Activated CD8-positive, alpha-beta T cell treated with anti-CD3 and anti-CD28 coated beads for 36 hours (primary cell): ENCODE measurements at regions of chr3 and their contacts with region 1.

Region 1: DNA sequence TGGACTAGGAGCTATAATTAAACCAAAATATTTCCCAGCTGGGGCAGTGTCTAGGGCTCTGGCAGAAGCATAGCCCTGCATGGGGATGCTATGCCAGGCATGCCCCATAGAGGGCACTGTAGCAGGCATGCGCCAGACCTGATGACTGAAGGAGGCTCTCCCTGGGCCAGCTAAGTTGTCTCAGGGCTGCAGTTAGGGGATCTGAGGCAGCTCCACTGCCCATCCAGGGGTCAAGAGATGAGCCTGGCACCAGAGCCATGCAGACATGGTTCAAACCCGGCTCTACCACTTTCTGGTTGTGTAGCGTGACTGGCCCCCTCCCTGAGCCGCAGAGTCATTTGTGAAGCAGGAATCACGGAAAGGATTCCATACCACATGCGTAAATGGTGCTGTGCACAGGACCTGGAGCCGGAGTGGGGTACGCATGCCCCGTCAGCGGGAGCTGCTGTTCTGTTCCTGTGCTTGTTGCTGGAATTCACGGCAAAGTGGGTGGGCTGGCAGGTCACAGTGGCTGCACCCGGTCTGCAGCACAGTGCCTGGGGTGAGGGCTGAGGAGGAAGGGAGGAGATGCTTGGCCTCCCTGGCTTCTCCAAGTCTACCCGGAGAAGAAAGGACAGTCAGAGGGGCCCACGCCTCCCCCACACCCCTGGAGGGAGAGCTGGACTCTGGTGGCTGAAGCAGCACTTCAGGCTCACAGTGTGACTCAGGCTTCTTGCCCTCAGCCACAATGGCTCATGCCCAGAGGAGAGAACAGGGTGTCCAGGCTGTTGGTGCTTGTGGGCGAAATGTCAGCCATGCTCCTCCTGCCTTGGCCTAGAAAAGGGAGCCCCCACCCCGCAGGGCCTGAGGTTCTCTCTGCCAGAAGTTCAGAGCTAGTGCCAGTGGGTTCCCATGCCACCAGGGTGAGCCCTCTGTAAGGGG is 43.1 kb downstream of the DNASE1L3 start:
- DNase-seq: peak; percentile 80
- ATAC-seq: peak; percentile 99
- H3K4me3 Mint-ChIP-seq: no peak overlapping the region
- H3K27ac Mint-ChIP-seq: no peak overlapping the region
- H3K4me1 Mint-ChIP-seq: peaks cover 3% of the 10 kb centered on the region
- H3K27me3 Mint-ChIP-seq: no peaks in the 10 kb centered on the region
- CTCF ChIP-seq: peak; percentile 92

Region 2: GRCh38 chr3:57983734-57984518 is 183.8 kb before region 1 on chr3:
- CTCF ChIA-PET with region 1: no interaction called
- POLR2A ChIA-PET with region 1: no interaction called
- intact Hi-C with region 1: no loop called
- DNase-seq: peak; percentile 76
- ATAC-seq: peak; percentile 97
- H3K4me3 Mint-ChIP-seq: no peak overlapping the region
- H3K27ac Mint-ChIP-seq: peak overlapping the region; percentile 92
- H3K4me1 Mint-ChIP-seq: peaks cover 18% of the 10 kb centered on the region
- H3K27me3 Mint-ChIP-seq: no peaks in the 10 kb centered on the region
- CTCF ChIP-seq: no peak

Region 3: DNA sequence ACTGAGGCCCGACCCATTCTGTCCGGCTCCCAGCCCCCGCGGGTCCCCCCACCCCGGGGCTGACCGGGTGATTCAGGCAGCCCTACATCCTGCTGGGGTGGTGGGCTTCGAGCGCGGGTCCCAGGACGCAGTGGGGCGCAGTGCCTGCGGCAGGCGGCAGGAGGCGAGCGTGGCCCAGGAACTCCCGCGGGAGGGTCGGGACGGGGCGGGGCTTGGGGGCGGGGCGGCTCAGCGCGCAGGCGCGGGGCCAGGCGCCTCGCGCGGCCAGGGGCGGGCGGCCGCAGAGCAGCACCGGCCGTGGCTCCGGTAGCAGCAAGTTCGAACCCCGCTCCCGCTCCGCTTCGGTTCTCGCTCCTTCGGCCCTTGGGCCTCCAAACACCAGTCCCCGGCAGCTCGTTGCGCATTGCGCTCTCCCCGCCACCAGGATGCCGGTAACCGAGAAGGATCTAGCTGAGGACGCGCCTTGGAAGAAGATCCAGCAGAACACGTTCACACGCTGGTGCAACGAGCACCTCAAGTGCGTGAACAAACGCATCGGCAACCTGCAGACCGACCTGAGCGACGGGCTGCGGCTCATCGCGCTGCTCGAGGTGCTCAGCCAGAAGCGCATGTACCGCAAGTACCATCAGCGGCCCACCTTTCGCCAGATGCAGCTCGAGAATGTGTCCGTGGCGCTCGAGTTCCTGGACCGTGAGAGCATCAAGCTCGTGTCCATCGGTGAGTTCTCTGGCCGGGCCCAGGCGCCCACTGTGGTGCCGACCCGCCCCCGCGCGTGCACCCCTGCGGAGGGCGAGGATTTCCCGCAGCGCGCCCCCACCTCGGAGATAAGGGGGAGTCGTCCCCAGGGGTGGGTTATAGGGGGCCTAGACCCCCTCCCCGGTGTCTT is 159.3 kb before region 1 on chr3 and contains the start of gene FLNB:
- CTCF ChIA-PET with region 1: interaction called, 37 read pairs
- POLR2A ChIA-PET with region 1: no interaction called
- intact Hi-C with region 1: loop called (anchors 5 kb)
- DNase-seq: peak; percentile 78
- ATAC-seq: peak; percentile 88
- H3K4me3 Mint-ChIP-seq: peak within 1 kb of the TSS; percentile 91
- H3K27ac Mint-ChIP-seq: peak within 1 kb of the TSS; percentile 87
- H3K4me1 Mint-ChIP-seq: peaks cover 31% of the 10 kb centered on the region
- H3K27me3 Mint-ChIP-seq: no peaks in the 10 kb centered on the region
- CTCF ChIP-seq: peak; percentile 77
- total RNA-seq, gene FLNB: 26.3 to 28.4 TPM

Region 4: DNA sequence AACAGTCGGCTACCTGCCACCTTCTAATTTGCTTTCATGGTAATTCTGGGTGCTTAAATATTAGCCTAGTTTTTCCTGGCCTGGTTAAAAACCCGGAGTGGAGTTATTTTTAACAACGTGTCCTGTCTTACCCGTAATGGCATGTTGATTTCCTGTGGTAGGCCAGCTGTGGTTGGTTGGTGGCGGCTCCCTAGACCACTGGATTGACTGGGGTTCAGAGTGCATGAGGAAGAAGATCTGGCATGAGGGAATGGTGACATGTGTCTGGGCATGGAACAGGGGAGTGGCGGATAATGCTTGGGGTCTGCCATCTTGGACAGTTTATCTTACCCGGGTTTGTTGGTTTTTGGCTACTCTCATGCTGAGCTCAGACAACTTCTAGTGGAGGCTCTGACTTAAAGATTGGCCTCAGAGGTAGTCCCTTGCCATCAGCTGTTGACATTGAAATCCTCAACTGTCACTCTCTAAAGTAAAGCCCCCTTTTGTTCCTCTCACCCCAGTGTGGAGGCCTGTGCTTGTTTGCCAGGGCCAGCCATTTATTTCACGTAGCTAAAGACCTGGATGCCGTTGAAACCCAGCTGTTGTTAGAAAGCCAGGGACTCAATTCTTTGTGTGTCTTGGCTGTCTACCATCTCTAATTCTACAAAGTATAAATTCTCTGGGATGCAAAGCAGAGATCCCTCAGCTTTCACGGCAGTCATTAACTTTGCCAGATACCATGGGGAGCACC is 38.5 kb before region 1 on chr3:
- CTCF ChIA-PET with region 1: interaction called, 28 read pairs
- POLR2A ChIA-PET with region 1: no interaction called
- intact Hi-C with region 1: no loop called
- DNase-seq: no peak
- ATAC-seq: no peak
- H3K4me3 Mint-ChIP-seq: no peak overlapping the region
- H3K27ac Mint-ChIP-seq: no peak overlapping the region
- H3K4me1 Mint-ChIP-seq: peaks cover 3% of the 10 kb centered on the region
- H3K27me3 Mint-ChIP-seq: no peaks in the 10 kb centered on the region
- CTCF ChIP-seq: no peak

Region 5: DNA sequence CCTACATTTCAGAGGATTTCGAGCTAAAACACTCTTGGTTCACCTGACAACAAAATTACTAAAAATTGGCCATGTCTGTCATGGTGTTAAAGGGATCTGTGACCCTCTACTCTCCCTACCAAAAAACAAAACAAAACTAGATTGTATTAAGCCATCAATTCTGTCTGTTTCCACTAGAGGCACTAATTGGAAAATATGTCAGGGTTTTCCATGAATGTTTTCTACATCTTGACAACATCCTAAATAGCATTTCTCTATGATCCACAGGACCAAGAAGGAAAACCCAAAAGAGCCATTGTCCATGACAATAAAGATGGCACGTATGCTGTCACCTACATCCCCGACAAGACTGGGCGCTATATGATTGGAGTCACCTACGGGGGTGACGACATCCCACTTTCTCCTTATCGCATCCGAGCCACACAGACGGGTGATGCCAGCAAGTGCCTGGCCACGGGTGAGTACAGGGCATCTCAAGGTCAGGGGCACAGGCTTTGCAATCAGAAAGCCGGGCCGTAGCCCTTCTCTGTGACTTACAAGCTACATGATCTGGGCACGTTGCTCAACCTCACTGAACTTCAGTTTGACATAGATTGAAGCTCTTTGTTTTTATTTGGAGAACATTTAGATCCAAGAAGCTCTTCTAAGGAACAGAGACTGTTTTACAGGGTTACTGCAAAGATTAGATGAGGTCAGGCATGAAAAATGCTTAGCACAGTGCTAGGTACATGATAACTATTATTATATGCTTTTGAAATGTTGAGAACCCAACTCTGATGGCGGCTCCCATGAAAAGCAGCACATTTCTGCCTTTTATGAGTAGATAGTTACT is 31.8 kb before region 1 on chr3:
- CTCF ChIA-PET with region 1: interaction called, 29 read pairs
- POLR2A ChIA-PET with region 1: no interaction called
- intact Hi-C with region 1: no loop called
- DNase-seq: no peak
- ATAC-seq: no peak
- H3K4me3 Mint-ChIP-seq: no peak overlapping the region
- H3K27ac Mint-ChIP-seq: no peak overlapping the region
- H3K4me1 Mint-ChIP-seq: no peaks in the 10 kb centered on the region
- H3K27me3 Mint-ChIP-seq: no peaks in the 10 kb centered on the region
- CTCF ChIP-seq: peak; percentile 52